CD14-positive monocyte (primary cell): ENCODE measurements at regions of chr3 and their contacts with region 1.

Region 1: DNA sequence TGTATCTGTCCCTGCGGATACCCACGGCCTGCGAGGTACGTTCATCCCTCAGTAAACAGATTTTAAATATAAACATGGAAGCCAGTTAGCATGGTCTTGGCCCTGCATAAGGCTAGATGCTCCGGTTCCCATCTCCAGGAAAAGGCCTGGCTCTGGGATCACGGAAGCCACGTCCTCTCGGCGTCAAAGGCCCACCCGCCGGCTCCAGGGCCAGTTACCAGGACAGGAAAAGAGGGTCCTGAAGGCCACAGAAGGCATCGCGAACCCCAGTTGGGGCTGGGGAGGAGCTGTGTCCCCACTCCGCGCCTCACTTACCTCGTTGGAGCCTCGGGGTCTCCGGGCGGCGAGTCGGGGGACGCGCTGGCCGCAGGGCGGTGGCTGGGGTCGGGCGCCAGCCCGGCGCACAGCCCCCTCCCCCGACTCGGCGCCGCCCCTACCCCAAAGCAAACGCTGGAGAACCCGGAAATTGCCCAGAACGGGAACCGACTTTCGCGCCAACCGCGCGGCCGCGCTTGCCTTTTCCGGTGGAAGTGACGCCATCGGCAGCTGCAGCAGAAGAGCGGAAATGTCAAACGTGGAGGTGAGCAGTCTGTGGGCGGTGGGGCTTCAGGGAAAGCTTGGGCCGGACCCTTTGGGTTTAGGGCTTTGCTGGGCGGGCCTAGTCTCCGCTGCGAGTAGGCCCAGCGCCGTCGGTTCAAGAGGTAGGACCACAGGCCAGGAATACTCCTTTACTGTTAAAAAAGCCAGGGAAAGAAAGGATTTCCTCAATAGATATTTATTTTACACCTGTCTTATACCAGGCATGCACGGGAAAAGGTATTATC is at the start of gene TOPBP1:
- DNase-seq: peak; percentile 60 to 76 (median 74)
- H3K4me3 ChIP-seq: peak within 1 kb of the TSS; percentile 69 to 98 (median 96)
- H3K4me3 Mint-ChIP-seq: peak within 1 kb of the TSS; percentile 96 to 99
- H3K27ac ChIP-seq: peak within 1 kb of the TSS; percentile 37 to 96
- H3K27ac Mint-ChIP-seq: peak within 1 kb of the TSS; percentile 91 to 98 (median 94)
- H3K4me1 ChIP-seq: peaks cover 15 to 20% of the 10 kb centered on the region in 2 donors
- H3K4me1 Mint-ChIP-seq: peaks cover 40% of the 10 kb centered on the region
- H3K27me3 ChIP-seq: no peaks in the 10 kb centered on the region
- H3K27me3 Mint-ChIP-seq: no peaks in the 10 kb centered on the region
- CTCF ChIP-seq: no peak
- polyA plus RNA-seq, gene TOPBP1: 4.9 to 24.3 (median 7.0) TPM

Region 2: GRCh38 chr3:133578548-133579191 is 83.0 kb before region 1 on chr3:
- intact Hi-C with region 1: loop called in 1 of 2 experiments (anchors 5 kb)
- DNase-seq: peak in 1 of 3 donors; percentile 27
- H3K4me3 ChIP-seq: no peak overlapping the region
- H3K4me3 Mint-ChIP-seq: no peak overlapping the region
- H3K27ac ChIP-seq: peak overlapping the region in 1 of 2 donors; percentile 21
- H3K27ac Mint-ChIP-seq: peak overlapping the region in 3 of 7 donors; percentile 26 to 69 (median 68)
- H3K4me1 ChIP-seq: peaks cover 32 to 42% of the 10 kb centered on the region in 2 donors
- H3K4me1 Mint-ChIP-seq: peaks cover 37% of the 10 kb centered on the region
- H3K27me3 ChIP-seq: no peaks in the 10 kb centered on the region
- H3K27me3 Mint-ChIP-seq: peaks cover 0 to 1% (median 0%) of the 10 kb centered on the region in 3 donors
- CTCF ChIP-seq: peak; percentile 73

Region 3: DNA sequence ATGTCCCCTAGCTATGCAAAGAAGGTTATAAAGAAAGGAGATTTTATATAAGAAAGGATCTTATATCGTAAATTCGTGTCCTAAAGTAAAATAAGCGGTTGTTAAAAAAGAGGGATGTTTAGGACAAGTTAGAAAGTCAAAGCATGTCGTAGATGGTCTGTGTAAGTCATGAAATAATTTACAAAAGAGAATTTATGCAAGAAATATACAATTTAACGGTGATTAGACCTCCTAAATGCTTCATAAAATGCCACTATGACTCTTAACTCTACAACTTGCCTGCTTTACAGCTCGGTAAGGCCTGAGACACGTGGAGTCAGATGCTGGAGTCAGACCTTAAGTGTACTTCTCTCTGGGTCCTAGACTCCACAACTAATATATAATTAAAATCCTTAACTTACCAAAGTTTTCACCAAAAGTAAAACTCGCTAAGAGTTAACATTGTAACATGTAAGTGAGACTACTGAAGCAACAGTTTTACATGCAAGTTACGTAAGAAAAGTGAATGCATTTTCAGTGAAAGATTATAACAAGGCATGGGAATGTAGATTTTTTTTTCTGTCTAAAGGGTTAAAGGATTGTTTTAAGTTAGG is 130.6 kb after region 1 on chr3:
- intact Hi-C with region 1: no loop called
- DNase-seq: no peak
- H3K4me3 ChIP-seq: no peak overlapping the region
- H3K4me3 Mint-ChIP-seq: no peak overlapping the region
- H3K27ac ChIP-seq: no peak overlapping the region
- H3K27ac Mint-ChIP-seq: no peak overlapping the region
- H3K4me1 ChIP-seq: no peaks in the 10 kb centered on the region
- H3K4me1 Mint-ChIP-seq: no peaks in the 10 kb centered on the region
- H3K27me3 ChIP-seq: peaks cover 0 to 2% of the 10 kb centered on the region in 2 donors
- H3K27me3 Mint-ChIP-seq: peaks cover 0 to 3% (median 0%) of the 10 kb centered on the region in 3 donors
- CTCF ChIP-seq: no peak

Region 4: DNA sequence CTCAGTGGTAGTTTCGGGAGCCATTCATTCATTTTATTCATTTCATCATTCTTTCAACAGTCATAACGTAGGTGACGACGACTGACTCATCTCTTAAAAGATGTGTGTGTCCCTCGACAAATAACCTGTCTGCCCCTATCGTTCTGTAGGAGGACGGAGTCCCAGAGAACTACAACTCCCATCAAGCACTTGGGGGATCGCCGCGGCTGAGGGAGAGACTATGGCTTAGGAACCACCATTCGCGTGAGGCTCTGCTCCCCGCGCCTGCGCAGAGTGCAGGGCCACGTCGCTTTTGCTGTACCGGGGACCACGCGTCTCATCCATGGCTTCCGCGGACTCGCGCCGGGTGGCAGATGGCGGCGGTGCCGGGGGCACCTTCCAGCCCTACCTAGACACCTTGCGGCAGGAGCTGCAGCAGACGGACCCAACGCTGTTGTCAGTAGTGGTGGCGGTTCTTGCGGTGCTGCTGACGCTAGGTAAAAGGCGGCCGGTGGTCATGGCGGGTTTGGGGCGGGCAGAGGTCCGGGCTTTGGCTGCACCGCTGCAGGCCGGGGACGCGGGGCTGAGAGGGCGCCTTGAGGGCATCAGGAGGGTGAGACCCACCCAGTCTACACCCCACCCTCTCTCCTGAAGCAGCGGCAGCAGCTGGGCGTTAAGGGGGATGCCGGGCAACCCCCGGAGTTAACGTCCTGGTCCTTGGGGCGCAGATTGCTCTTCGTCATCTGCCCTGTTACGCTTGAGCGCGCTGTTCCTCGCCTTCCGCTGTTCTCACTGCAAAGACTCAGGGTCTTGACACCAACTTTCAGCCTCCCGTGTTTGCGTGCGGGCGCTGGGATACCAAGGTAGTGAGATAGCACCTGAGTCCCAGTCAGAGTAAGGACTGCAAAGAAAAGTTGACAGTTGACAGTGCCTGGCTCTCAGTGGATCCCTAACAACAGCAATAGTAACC is 144.1 kb after region 1 on chr3 and contains the start of gene SRPRB:
- intact Hi-C with region 1: loop called in 1 of 2 experiments (anchors 10 kb)
- DNase-seq: peak; percentile 88 to 92 (median 91)
- H3K4me3 ChIP-seq: peak within 1 kb of the TSS; percentile 82 to 94 (median 89)
- H3K4me3 Mint-ChIP-seq: peak within 1 kb of the TSS; percentile 94 to 97
- H3K27ac ChIP-seq: peak within 1 kb of the TSS; percentile 19 to 73
- H3K27ac Mint-ChIP-seq: peak within 1 kb of the TSS; percentile 73 to 91 (median 87)
- H3K4me1 ChIP-seq: peaks cover 16% of the 10 kb centered on the region in 2 donors
- H3K4me1 Mint-ChIP-seq: peaks cover 23% of the 10 kb centered on the region
- H3K27me3 ChIP-seq: no peaks in the 10 kb centered on the region
- H3K27me3 Mint-ChIP-seq: peaks cover 3 to 7% (median 6%) of the 10 kb centered on the region in 3 donors
- CTCF ChIP-seq: no peak
- polyA plus RNA-seq, gene SRPRB: 6.1 to 30.6 (median 29.9) TPM